BJ (cell line): ENCODE measurements at regions of chr2 and their contacts with region 1.

Region 1: GRCh38 chr2:207484444-207485391 is 45.0 kb upstream of the CREB1 start:
- DNase-seq: no peak
- H3K4me3 ChIP-seq: no peak overlapping the region
- H3K27me3 ChIP-seq: no peaks in the 10 kb centered on the region
- CTCF ChIP-seq: no peak

Region 2: GRCh38 chr2:207103132-207103531 is 381.6 kb before region 1 on chr2:
- CTCF ChIA-PET with region 1: no interaction called
- POLR2A ChIA-PET with region 1: interaction called, 10 read pairs
- DNase-seq: no peak
- H3K4me3 ChIP-seq: no peak overlapping the region
- H3K27me3 ChIP-seq: no peaks in the 10 kb centered on the region
- CTCF ChIP-seq: no peak